Heart right ventricle (tissue), 16 donors: ENCODE measurements at regions of chr5 and their contacts with region 1.

Region 1: GRCh38 chr5:147892821-147893232 is 13.5 kb downstream of the C5orf46 start:
- DNase-seq: no peak
- ATAC-seq: peak in 1 of 8 donors; percentile 56
- H3K4me3 ChIP-seq: no peak overlapping the region
- H3K27ac ChIP-seq: no peak overlapping the region
- H3K4me1 ChIP-seq: peaks cover 0 to 5% (median 0%) of the 10 kb centered on the region in 9 donors
- H3K27me3 ChIP-seq: no peaks in the 10 kb centered on the region
- CTCF ChIP-seq: no peak

Region 2: GRCh38 chr5:147613359-147613758 is 279.5 kb before region 1 on chr5:
- intact Hi-C with region 1: no loop called
- DNase-seq: no peak
- ATAC-seq: no peak
- H3K4me3 ChIP-seq: no peak overlapping the region
- H3K27ac ChIP-seq: no peak overlapping the region
- H3K4me1 ChIP-seq: no peaks in the 10 kb centered on the region
- H3K27me3 ChIP-seq: peaks cover 0 to 21% (median 4%) of the 10 kb centered on the region in 7 donors
- CTCF ChIP-seq: no peak

Region 3: GRCh38 chr5:147773139-147773538 is 119.7 kb before region 1 on chr5:
- intact Hi-C with region 1: no loop called
- DNase-seq: no peak
- ATAC-seq: no peak
- H3K4me3 ChIP-seq: no peak overlapping the region
- H3K27ac ChIP-seq: no peak overlapping the region
- H3K4me1 ChIP-seq: no peaks in the 10 kb centered on the region
- H3K27me3 ChIP-seq: no peaks in the 10 kb centered on the region
- CTCF ChIP-seq: no peak

Region 4: GRCh38 chr5:147906332-147907095 is 13.7 kb after region 1 on chr5 and contains the start of gene C5orf46:
- intact Hi-C with region 1: loop called in 1 of 10 experiments (anchors 1 kb)
- DNase-seq: no peak
- ATAC-seq: peak in 6 of 8 donors; percentile 39 to 80 (median 60)
- H3K4me3 ChIP-seq: peak within 1 kb of the TSS in 4 of 10 donors; percentile 14 to 27 (median 22)
- H3K27ac ChIP-seq: peak within 1 kb of the TSS in 5 of 10 donors; percentile 37 to 59 (median 51)
- H3K4me1 ChIP-seq: peaks cover 0 to 23% (median 2%) of the 10 kb centered on the region in 9 donors
- H3K27me3 ChIP-seq: no peaks in the 10 kb centered on the region
- CTCF ChIP-seq: no peak
- total RNA-seq, gene C5orf46: 2.3 to 10.9 (median 4.7) TPM in 9 of 10 donors, not detected in the other

Region 5: GRCh38 chr5:148214665-148215185 is 321.9 kb after region 1 on chr5:
- intact Hi-C with region 1: loop called in 1 of 10 experiments (anchors 5 kb)
- DNase-seq: no peak
- ATAC-seq: no peak
- H3K4me3 ChIP-seq: no peak overlapping the region
- H3K27ac ChIP-seq: no peak overlapping the region
- H3K4me1 ChIP-seq: no peaks in the 10 kb centered on the region
- H3K27me3 ChIP-seq: no peaks in the 10 kb centered on the region
- CTCF ChIP-seq: no peak